Vagina (tissue), 2 donors: ENCODE measurements at regions of chr19 and their contacts with region 1.

Region 1: GRCh38 chr19:11673608-11674041 is 65.1 kb downstream of the ZNF823 start:
- DNase-seq: peak in 1 of 2 donors; percentile 70
- H3K4me3 ChIP-seq: peak overlapping the region; percentile 39 to 43
- H3K27ac ChIP-seq: peak overlapping the region; percentile 20
- H3K4me1 ChIP-seq: peaks cover 12% of the 10 kb centered on the region
- H3K27me3 ChIP-seq: no peaks in the 10 kb centered on the region
- CTCF ChIP-seq: peak; percentile 36 to 52 (median 41)
- POLR2A ChIP-seq: no peak

Region 2: GRCh38 chr19:11324079-11324661 is 349.5 kb before region 1 on chr19:
- intact Hi-C with region 1: no loop called
- DNase-seq: peak in 1 of 2 donors; percentile 98
- H3K4me3 ChIP-seq: peak overlapping the region in 1 of 2 donors; percentile 9
- H3K27ac ChIP-seq: peak overlapping the region; percentile 84
- H3K4me1 ChIP-seq: peaks cover 26% of the 10 kb centered on the region
- H3K27me3 ChIP-seq: no peaks in the 10 kb centered on the region
- CTCF ChIP-seq: no peak
- POLR2A ChIP-seq: no peak

Region 3: DNA sequence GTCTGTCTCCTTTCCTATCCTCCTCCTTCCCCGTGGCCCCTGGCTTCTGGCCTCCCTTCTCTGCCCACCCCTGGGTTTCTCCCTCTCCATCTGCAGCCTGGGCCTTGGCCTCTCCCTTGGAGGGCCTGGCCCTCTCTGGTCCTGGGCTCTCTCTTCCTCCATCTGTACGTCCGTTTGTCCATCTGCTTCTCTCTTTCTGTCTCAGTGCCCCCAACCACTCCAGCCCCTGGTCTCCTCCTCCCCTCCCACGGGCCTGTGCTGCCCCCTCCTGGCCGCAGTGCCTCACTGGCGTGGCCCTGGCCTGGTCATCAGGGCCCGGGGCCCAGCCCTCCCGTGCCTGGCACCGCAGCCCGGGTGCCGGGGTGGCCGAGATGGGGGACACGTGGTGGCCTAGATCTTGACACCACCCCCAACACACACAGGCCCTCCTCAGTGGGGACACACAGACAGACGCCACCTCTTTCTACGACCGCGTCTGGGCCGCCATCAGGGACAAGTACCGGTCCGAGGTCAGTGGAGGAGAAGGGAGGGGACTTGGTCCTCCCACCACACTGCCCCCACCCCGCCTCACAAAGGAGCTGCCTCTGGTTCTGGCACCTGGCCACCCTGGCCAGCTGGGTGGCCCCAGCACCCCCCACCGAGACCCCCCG is 226.8 kb before region 1 on chr19:
- intact Hi-C with region 1: no loop called
- DNase-seq: no peak
- H3K4me3 ChIP-seq: no peak overlapping the region
- H3K27ac ChIP-seq: no peak overlapping the region
- H3K4me1 ChIP-seq: no peaks in the 10 kb centered on the region
- H3K27me3 ChIP-seq: no peaks in the 10 kb centered on the region
- CTCF ChIP-seq: peak; percentile 46 to 72 (median 67)
- POLR2A ChIP-seq: no peak

Region 4: GRCh38 chr19:11798391-11799330 is 125.0 kb after region 1 on chr19 and contains the start of gene ZNF491:
- intact Hi-C with region 1: loop called (anchors 10 kb)
- DNase-seq: peak in 1 of 2 donors; percentile 90
- H3K4me3 ChIP-seq: peak within 1 kb of the TSS; percentile 63 to 79
- H3K27ac ChIP-seq: peak within 1 kb of the TSS; percentile 84
- H3K4me1 ChIP-seq: peaks cover 24% of the 10 kb centered on the region
- H3K27me3 ChIP-seq: no peaks in the 10 kb centered on the region
- CTCF ChIP-seq: peak in 1 of 3 experiments; percentile 6
- POLR2A ChIP-seq: peak in 1 of 2 donors; percentile 42
- total RNA-seq, gene ZNF491: 5.2 TPM